CD4-positive, alpha-beta memory T cell (primary cell): ENCODE measurements at regions of chr5 and their contacts with region 1.

Region 1: DNA sequence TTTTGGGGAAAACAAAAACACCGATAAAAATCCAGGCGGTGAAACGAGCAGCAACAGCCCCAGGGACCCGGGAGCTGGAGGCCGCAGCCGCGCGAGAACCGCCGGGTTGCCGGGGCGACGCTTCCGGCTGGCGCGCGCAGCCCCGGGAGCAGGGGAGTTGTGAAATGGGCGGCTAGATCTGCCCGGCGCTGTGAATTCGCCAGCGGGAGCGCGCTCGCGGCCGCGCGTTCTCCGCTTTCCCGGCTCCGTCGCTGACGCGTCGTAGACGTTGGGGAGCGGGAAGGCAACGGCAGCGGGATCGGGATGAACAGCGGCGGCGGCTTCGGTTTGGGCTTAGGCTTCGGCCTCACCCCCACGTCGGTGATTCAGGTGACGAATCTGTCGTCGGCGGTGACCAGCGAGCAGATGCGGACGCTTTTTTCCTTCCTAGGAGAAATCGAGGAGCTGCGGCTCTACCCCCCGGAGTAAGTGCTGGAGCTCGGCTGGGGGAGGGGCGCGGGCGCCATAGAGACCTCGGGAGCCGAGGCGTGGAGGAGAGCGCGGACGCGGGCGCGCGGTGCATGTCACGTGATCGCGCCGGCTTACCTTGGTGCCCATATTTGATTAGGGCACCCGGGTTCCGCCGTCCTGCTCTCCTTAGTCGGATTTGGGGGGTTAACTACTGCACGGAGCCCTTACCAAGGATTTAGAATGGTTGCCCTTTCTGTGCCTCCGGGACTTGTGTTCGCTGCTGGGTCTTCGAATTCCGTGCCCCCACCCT is at the start of gene SREK1:
- DNase-seq: peak; percentile 88 to 90 (median 89)
- H3K4me3 ChIP-seq: peak within 1 kb of the TSS; percentile 94 to 96
- H3K4me3 Mint-ChIP-seq: peak within 1 kb of the TSS; percentile 98 to 100 (median 99)
- H3K27ac ChIP-seq: peak within 1 kb of the TSS; percentile 99
- H3K27ac Mint-ChIP-seq: peak within 1 kb of the TSS; percentile 100
- H3K4me1 ChIP-seq: peaks cover 48% of the 10 kb centered on the region
- H3K4me1 Mint-ChIP-seq: peaks cover 23 to 47% (median 31%) of the 10 kb centered on the region in 4 donors
- H3K27me3 ChIP-seq: no peaks in the 10 kb centered on the region
- H3K27me3 Mint-ChIP-seq: peaks cover 0 to 2% of the 10 kb centered on the region in 2 donors
- total RNA-seq, gene SREK1: 71.0 to 73.7 TPM

Region 2: DNA sequence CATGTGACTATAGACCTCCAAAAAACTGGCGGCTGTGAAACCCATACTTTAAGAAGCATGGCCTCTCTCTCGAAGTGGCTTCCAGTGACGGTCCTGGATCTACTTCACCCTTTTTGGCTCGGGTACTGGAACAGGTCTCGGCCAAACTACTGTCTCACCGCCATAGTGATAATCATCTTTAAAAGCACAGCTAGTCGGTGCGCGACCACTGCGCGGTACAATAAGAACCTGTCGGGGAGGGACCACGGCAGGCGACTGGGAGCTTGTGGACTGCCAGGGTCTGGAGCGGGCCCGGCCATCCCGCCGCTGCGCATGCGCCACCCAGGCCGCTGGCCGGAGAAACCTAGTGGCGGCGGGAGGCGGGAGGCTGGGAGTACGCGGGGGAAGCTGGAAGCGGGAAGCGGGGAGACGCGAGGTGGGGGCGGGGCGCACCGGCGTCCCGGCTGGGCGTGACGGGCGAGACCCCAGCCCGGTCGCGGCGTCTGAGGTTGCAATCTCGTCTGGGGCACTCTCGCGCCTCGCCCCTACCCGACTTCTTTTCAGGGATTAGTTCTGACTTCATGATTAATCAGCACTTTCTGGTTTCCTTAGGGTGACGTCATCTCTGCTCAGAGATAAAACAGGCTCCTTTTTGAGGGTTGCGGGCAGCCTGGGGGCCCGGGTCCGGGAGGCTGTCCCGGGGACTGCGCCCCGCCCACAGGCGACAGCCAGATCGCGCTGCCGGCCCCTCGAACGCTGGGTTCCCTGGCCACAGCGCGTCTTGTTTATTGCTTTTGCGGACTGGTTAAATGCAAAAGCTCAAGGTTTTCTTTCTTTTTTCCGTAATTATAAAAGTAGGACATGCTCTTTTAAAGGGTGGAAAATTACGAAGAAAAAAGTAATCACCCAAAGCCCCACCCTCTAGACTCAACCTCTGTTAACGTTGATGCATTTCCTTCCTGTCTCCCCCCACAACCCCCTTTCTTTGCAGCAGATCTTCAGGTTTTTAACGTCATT is 1108.7 kb before region 1 on chr5:
- CTCF ChIA-PET with region 1: no interaction called
- POLR2A ChIA-PET with region 1: no interaction called
- intact Hi-C with region 1: loop called (anchors 10 kb)
- DNase-seq: peak; percentile 86 to 94 (median 90)
- H3K4me3 ChIP-seq: peak overlapping the region; percentile 66 to 74
- H3K4me3 Mint-ChIP-seq: peak overlapping the region; percentile 66 to 92 (median 84)
- H3K27ac ChIP-seq: peak overlapping the region; percentile 90
- H3K27ac Mint-ChIP-seq: peak overlapping the region; percentile 80 to 100 (median 95)
- H3K4me1 ChIP-seq: peaks cover 30% of the 10 kb centered on the region
- H3K4me1 Mint-ChIP-seq: peaks cover 18 to 38% (median 28%) of the 10 kb centered on the region in 4 donors
- H3K27me3 ChIP-seq: no peaks in the 10 kb centered on the region
- H3K27me3 Mint-ChIP-seq: no peaks in the 10 kb centered on the region

Region 3: GRCh38 chr5:65624571-65625555 is 519.4 kb before region 1 on chr5 and contains the starts of genes SHLD3 and TRAPPC13:
- CTCF ChIA-PET with region 1: no interaction called
- POLR2A ChIA-PET with region 1: interaction called, 9 read pairs
- intact Hi-C with region 1: loop called (anchors 2 kb)
- DNase-seq: peak; percentile 90 to 93 (median 92)
- H3K4me3 ChIP-seq: peak within 1 kb of the TSS; percentile 74 to 98
- H3K4me3 Mint-ChIP-seq: peak within 1 kb of the TSS; percentile 96 to 100 (median 99)
- H3K27ac ChIP-seq: peak within 1 kb of the TSS; percentile 79
- H3K27ac Mint-ChIP-seq: peak within 1 kb of the TSS; percentile 97 to 100 (median 99)
- H3K4me1 ChIP-seq: peaks cover 34% of the 10 kb centered on the region
- H3K4me1 Mint-ChIP-seq: peaks cover 28 to 68% (median 42%) of the 10 kb centered on the region in 4 donors
- H3K27me3 ChIP-seq: no peaks in the 10 kb centered on the region
- H3K27me3 Mint-ChIP-seq: peaks cover 2 to 3% of the 10 kb centered on the region in 2 donors
- total RNA-seq, gene SHLD3: 6.1 to 7.4 TPM
- total RNA-seq, gene TRAPPC13: 20.9 TPM

Region 4: DNA sequence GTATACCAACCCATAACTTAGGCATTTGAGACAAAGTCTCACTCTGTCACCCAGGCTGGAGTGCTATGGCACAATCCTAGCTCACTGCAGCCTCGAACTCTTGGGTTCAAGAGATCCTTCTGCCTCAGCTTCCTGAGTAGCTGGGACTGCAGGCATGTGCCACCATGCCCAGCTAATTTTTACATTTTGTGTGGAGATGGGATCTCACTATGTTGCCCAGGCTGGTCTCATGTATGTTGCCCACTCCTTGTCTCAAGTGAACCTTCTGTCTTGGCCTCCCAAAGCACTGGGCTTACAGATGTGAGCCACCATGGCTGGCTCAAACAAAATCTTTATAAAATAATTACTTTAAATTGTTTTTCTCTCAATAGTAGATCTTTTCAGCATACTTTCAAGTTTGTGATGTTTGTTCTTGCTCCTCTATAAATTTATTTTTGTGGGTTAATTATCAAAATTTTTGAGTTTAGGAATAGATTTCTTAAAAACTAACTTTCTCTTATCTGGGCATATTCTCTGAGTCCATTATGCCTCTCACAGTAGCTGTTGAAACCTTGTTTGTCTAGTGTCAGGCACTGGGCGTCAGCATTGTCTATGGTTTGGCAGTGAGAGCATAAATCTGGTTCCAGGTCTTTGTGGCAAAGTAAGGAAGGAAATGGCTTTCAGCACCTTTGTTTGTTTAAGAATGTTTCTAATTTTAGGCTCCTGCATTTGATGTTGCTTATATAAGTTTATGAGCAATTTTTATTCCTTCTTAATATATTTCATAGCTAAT is 383.6 kb before region 1 on chr5:
- CTCF ChIA-PET with region 1: interaction called, 3 read pairs
- POLR2A ChIA-PET with region 1: interaction called, 6 read pairs
- intact Hi-C with region 1: loop called (anchors 1 kb)
- DNase-seq: peak; percentile 63 to 74 (median 68)
- H3K4me3 ChIP-seq: no peak overlapping the region
- H3K4me3 Mint-ChIP-seq: no peak overlapping the region
- H3K27ac ChIP-seq: no peak overlapping the region
- H3K27ac Mint-ChIP-seq: peak overlapping the region in 3 of 7 donors; percentile 1 to 53 (median 24)
- H3K4me1 ChIP-seq: peaks cover 5% of the 10 kb centered on the region
- H3K4me1 Mint-ChIP-seq: peaks cover 3 to 12% (median 6%) of the 10 kb centered on the region in 4 donors
- H3K27me3 ChIP-seq: no peaks in the 10 kb centered on the region
- H3K27me3 Mint-ChIP-seq: no peaks in the 10 kb centered on the region

Region 5: DNA sequence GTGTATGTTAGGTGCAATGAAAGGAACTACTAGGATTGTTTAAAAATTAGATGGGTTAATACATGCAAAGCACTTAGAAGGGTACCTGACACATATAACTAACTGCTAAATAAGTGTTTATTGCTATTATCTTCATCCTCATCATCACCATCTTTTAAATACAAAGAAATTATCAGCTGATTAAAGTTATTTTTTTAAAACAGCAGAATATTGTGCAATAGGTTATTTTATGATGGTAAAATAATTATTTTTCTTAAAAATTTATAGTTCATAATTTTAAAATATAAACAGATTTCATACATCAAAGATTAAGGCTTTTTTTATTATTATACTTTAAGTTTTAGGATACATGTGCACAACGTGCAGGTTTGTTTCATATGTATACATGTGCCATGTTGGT is 87.0 kb before region 1 on chr5:
- CTCF ChIA-PET with region 1: no interaction called
- POLR2A ChIA-PET with region 1: no interaction called
- intact Hi-C with region 1: loop called (anchors 10 kb)
- DNase-seq: no peak
- H3K4me3 ChIP-seq: no peak overlapping the region
- H3K4me3 Mint-ChIP-seq: no peak overlapping the region
- H3K27ac ChIP-seq: no peak overlapping the region
- H3K27ac Mint-ChIP-seq: no peak overlapping the region
- H3K4me1 ChIP-seq: no peaks in the 10 kb centered on the region
- H3K4me1 Mint-ChIP-seq: peaks cover 3 to 52% (median 32%) of the 10 kb centered on the region in 4 donors
- H3K27me3 ChIP-seq: no peaks in the 10 kb centered on the region
- H3K27me3 Mint-ChIP-seq: no peaks in the 10 kb centered on the region

Region 6: GRCh38 chr5:66171349-66172344 is 27.4 kb after region 1 on chr5:
- CTCF ChIA-PET with region 1: interaction called, 3 read pairs
- POLR2A ChIA-PET with region 1: interaction called, 6 read pairs
- intact Hi-C with region 1: loop called (anchors 1 kb)
- DNase-seq: peak; percentile 68 to 81 (median 78)
- H3K4me3 ChIP-seq: no peak overlapping the region
- H3K4me3 Mint-ChIP-seq: peak overlapping the region in 3 of 8 donors; percentile 18 to 53 (median 26)
- H3K27ac ChIP-seq: peak overlapping the region; percentile 43
- H3K27ac Mint-ChIP-seq: peak overlapping the region; percentile 86 to 96 (median 90)
- H3K4me1 ChIP-seq: peaks cover 14% of the 10 kb centered on the region
- H3K4me1 Mint-ChIP-seq: peaks cover 18 to 33% (median 20%) of the 10 kb centered on the region in 4 donors
- H3K27me3 ChIP-seq: no peaks in the 10 kb centered on the region
- H3K27me3 Mint-ChIP-seq: no peaks in the 10 kb centered on the region